ENCODE measurements at regions of chr10 and their contacts with region 1.

Region 1: DNA sequence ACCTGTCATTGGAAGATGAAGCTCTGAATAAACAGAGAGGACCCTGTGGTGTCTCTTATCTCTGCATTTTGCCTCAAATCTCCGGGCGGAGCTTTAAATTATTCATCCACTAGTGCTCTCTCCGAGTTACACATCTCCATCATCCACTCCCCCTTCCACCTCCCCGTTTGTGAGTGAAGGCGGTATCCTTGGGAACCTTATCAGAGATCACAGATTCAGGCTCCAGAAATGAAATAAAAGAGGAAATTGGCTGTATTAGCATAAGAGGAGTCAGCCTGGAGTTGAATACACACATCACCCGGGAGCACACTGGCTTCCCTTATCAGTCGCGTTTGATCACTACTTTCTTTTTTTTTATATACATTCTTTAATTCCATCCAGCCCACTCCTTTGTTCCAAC is 1184.8 kb downstream of the GATA3 start:
- DNase-seq: peak; percentile 73
- H3K4me3 ChIP-seq: peak overlapping the region; percentile 17 to 50; a peak in 3 of 4 replicates
- H3K27ac ChIP-seq: peak overlapping the region; percentile 83 to 100
- H3K4me1 ChIP-seq: peaks cover 12 to 48% of the 10 kb centered on the region in 2 experiments; a peak in 3 of 4 replicates
- H3K27me3 ChIP-seq: no peaks in the 10 kb centered on the region
- CTCF ChIP-seq: no peak
- EP300 ChIP-seq: peak; percentile 79 to 96
- RAD21 ChIP-seq: peak; percentile 41

Region 2: DNA sequence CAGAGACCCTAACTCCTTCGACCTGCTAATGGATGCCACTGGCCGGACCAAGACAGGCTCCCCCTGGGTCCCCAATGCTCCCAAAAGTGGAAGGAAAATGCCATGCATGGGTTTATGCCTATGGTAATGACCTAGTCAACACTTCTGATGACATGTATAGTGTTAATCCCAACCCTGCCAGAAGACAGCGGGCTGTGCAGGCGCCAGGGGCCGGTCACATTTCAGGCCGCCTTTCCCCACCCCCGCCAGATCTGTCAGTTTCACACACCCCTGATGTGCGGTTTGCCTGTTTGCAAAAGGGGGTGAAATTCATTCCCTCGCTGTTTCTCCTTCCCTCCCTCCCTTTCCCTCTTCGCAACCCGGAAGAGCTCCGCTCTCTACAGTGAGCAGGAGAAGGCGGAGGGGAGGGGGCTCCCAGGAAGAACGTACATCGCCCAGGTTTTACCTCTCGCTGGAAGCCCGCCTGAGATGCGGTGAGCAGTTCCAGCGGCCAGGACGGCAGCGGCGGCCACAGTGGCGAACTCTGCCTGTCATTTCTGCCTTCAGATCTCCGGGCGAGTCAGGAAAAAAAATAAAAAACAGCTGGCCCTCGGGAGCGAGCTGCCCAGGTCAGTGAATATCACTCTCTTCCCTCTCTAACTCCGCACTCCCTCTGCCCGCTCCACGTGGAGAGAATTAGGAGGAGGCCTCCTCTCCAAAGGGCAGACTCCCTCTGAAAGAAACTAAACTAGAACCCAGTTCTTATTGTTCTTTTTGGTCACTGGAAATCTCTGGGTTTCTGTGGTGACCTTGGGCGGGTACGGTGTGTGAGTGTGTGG is 1194.2 kb before region 1 on chr10:
- CTCF ChIA-PET with region 1: interaction called, 15 read pairs
- POLR2A ChIA-PET with region 1: interaction called, 16 read pairs
- DNase-seq: peak; percentile 87
- H3K4me3 ChIP-seq: peak overlapping the region; percentile 86 to 92
- H3K27ac ChIP-seq: peak overlapping the region; percentile 96 to 98; a peak in 3 of 4 replicates
- H3K4me1 ChIP-seq: peaks cover 8 to 18% of the 10 kb centered on the region in 2 experiments; a peak in 3 of 4 replicates
- H3K27me3 ChIP-seq: no peaks in the 10 kb centered on the region
- CTCF ChIP-seq: no peak
- EP300 ChIP-seq: 0 out of 4 replicates have a peak, but pooled peaks of 1 of the 2 experiments have one; percentile 28
- RAD21 ChIP-seq: no peak

Region 3: DNA sequence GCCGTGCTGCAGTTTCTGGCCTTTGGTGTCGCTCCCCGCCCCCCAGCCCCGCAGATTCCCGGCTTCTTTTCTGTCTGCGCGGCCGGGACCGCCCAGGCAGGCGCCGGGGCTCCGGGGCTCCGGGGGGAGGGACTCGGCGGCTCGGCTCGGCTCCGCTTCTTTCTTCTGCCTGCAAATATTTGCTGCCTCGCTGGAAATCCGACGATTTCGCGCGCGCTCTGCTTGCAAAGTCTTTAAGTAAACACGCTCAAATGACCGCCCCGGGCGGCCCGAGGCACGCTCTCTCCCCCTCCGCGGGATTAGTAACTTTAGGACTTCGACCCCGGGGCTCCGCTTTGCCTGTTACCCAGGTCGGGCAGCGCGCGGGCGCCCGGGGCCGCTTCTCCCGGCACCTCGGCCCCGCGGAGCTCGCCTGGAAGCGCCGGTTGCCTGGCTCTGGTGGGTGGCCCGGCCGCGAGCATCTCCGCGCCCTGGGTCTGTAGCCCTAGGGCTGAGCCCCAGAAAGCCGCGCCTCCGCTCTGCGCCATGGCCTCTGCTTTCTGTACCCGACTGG is 1188.7 kb before region 1 on chr10:
- CTCF ChIA-PET with region 1: interaction called, 15 read pairs
- POLR2A ChIA-PET with region 1: interaction called, 16 read pairs
- DNase-seq: no peak
- H3K4me3 ChIP-seq: peak overlapping the region; percentile 86 to 92
- H3K27ac ChIP-seq: peak overlapping the region; percentile 96 to 98
- H3K4me1 ChIP-seq: peaks cover 8 to 18% of the 10 kb centered on the region in 2 experiments; a peak in 2 of 4 replicates
- H3K27me3 ChIP-seq: no peaks in the 10 kb centered on the region
- CTCF ChIP-seq: no peak
- EP300 ChIP-seq: 0 out of 4 replicates have a peak, but pooled peaks of 1 of the 2 experiments have one; percentile 2
- RAD21 ChIP-seq: no peak

Region 4: GRCh38 chr10:8059959-8060703 is 1179.2 kb before region 1 on chr10:
- CTCF ChIA-PET with region 1: interaction called, 7 read pairs
- POLR2A ChIA-PET with region 1: interaction called, 10 read pairs
- DNase-seq: no peak
- H3K4me3 ChIP-seq: peak overlapping the region; percentile 86 to 92
- H3K27ac ChIP-seq: peak overlapping the region; percentile 96 to 98
- H3K4me1 ChIP-seq: peaks cover 19 to 60% of the 10 kb centered on the region in 2 experiments
- H3K27me3 ChIP-seq: no peaks in the 10 kb centered on the region
- CTCF ChIP-seq: no peak
- EP300 ChIP-seq: peak; percentile 28 to 85
- RAD21 ChIP-seq: peak; percentile 42

Region 5: GRCh38 chr10:9149147-9149895 is 90.0 kb before region 1 on chr10:
- CTCF ChIA-PET with region 1: no interaction called
- POLR2A ChIA-PET with region 1: no interaction called
- DNase-seq: peak; percentile 14
- H3K4me3 ChIP-seq: no peak overlapping the region
- H3K27ac ChIP-seq: no peak overlapping the region
- H3K4me1 ChIP-seq: peaks cover 0 to 3% of the 10 kb centered on the region in 2 experiments; a peak in 1 of 4 replicates
- H3K27me3 ChIP-seq: no peaks in the 10 kb centered on the region
- CTCF ChIP-seq: no peak
- EP300 ChIP-seq: no peak
- RAD21 ChIP-seq: no peak

Region 6: DNA sequence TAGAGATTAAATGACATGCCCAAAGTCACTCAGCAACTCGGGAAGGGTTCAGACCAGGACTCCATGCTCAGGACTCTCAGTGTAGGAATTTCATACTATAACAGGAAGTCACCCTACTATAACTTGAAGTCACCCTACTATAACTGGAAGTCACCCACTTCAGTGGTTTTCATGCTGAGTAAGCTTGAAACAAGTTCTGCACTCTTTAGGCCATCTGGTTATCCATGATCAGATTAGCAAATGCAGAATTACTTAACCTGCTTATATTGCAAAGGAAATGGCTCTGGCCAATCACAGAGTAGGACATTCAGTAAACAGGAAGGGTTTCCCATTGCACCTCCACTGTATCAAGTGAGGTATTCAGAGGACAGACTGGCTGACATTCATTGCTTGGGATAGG is 55.6 kb after region 1 on chr10:
- CTCF ChIA-PET with region 1: interaction called, 10 read pairs
- POLR2A ChIA-PET with region 1: interaction called, 4 read pairs
- DNase-seq: no peak
- H3K4me3 ChIP-seq: no peak overlapping the region
- H3K27ac ChIP-seq: peak overlapping the region in 1 of 2 experiments; percentile 100; a peak in 2 of 4 replicates
- H3K4me1 ChIP-seq: peaks cover 0 to 28% of the 10 kb centered on the region in 2 experiments; a peak in 2 of 4 replicates
- H3K27me3 ChIP-seq: no peaks in the 10 kb centered on the region
- CTCF ChIP-seq: no peak
- EP300 ChIP-seq: peak in 1 of 2 experiments; percentile 66; a peak in 1 of 4 replicates
- RAD21 ChIP-seq: peak; percentile 4; the same call in 1 of the 2 replicates

Measured in SK-N-SH (cell line).